A549 (cell line): ENCODE measurements at regions of chr14 and their contacts with region 1.

Region 1: GRCh38 chr14:104826189-104826860 is 25.4 kb downstream of the ZBTB42 start:
- DNase-seq: peak; percentile 82 to 92
- ATAC-seq: peak; percentile 78 to 86
- H3K4me3 ChIP-seq: peak overlapping the region; percentile 45
- H3K27ac ChIP-seq: peak overlapping the region; percentile 54 to 89
- H3K4me1 ChIP-seq: peaks cover 9% of the 10 kb centered on the region; the same call in 2 of the 3 replicates
- CTCF ChIP-seq: peak; percentile 92
- EP300 ChIP-seq: no peak
- POLR2A ChIP-seq: no peak; the same call in 1 of the 2 replicates
- RAD21 ChIP-seq: peak; percentile 63 to 86

Region 2: GRCh38 chr14:104341532-104342434 is 484.5 kb before region 1 on chr14:
- CTCF ChIA-PET with region 1: no interaction called
- POLR2A ChIA-PET with region 1: no interaction called
- DNase-seq: peak; percentile 81 to 87
- ATAC-seq: peak; percentile 85 to 95
- H3K4me3 ChIP-seq: peak overlapping the region; percentile 29; the same call in 1 of the 3 replicates
- H3K27ac ChIP-seq: no peak overlapping the region
- H3K4me1 ChIP-seq: no peaks in the 10 kb centered on the region
- CTCF ChIP-seq: peak; percentile 48
- EP300 ChIP-seq: no peak
- POLR2A ChIP-seq: no peak
- RAD21 ChIP-seq: peak; percentile 23; a peak in 2 of 5 replicates

Region 3: GRCh38 chr14:104752735-104753531 is 73.4 kb before region 1 on chr14 and contains the start of gene SIVA1:
- CTCF ChIA-PET with region 1: interaction called, 23 read pairs
- POLR2A ChIA-PET with region 1: no interaction called
- DNase-seq: peak; percentile 98 to 100
- ATAC-seq: peak; percentile 92 to 95
- H3K4me3 ChIP-seq: peak within 1 kb of the TSS; percentile 100
- H3K27ac ChIP-seq: peak within 1 kb of the TSS; percentile 93 to 96
- H3K4me1 ChIP-seq: peaks cover 28% of the 10 kb centered on the region
- CTCF ChIP-seq: no peak
- EP300 ChIP-seq: no peak
- POLR2A ChIP-seq: peak; percentile 86
- RAD21 ChIP-seq: no peak
- polyA plus RNA-seq, gene SIVA1: 90.0 and 94.2 TPM in 2 replicates

Region 4: GRCh38 chr14:104843442-104844305 is 17.3 kb after region 1 on chr14:
- CTCF ChIA-PET with region 1: interaction called, 28 read pairs
- POLR2A ChIA-PET with region 1: no interaction called
- DNase-seq: no peak
- ATAC-seq: peak; percentile 41 to 54; a peak in 3 of 6 replicates
- H3K4me3 ChIP-seq: no peak overlapping the region
- H3K27ac ChIP-seq: no peak overlapping the region
- H3K4me1 ChIP-seq: 0 out of 3 replicates have a peak, but pooled peaks cover 5% of the 10 kb centered on the region
- CTCF ChIP-seq: no peak
- EP300 ChIP-seq: no peak
- POLR2A ChIP-seq: no peak
- RAD21 ChIP-seq: no peak

Region 5: DNA sequence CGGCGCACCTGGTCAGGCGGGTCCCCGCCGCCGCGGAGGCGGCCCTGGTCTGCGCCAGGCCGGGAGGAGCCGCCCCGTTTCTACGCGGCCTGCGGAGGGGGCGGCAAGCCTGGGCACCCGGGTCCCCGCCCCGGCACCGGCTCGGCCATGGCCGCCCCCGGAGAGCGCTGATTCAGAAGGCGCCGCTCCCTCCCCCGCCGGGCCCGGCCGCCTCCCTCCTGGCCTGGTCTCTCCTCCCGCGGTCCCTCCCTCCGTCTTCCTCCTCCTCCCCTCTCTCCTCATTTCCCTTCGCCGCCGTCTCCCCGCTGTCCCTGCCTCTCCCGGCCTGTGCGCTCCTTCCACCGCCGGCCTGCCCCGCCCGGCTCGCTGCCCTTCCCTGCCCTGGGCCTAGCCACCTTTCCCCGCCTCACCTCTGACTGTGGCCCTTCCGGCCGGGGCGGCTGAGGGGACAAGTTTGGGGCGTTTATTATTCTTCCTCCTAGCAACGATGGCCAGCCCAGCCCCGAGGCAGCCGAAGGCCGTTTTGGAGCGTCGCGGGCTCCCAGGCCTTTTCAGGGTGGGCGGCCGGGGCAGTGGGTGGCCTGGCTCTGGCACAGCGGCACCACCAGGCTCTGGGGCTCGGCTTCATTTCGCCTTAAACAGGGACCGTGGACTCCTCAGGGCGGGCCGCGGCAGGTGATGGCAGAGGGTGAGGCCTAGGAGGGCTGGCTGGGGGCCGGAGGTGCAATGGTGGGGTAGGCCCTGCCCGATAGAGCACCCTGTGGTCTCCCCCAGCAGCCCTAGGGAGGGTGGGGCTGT is 39.5 kb after region 1 on chr14:
- CTCF ChIA-PET with region 1: interaction called, 31 read pairs
- POLR2A ChIA-PET with region 1: no interaction called
- DNase-seq: peak; percentile 41 to 58
- ATAC-seq: peak; percentile 61 to 78
- H3K4me3 ChIP-seq: peak overlapping the region; percentile 90
- H3K27ac ChIP-seq: peak overlapping the region; percentile 91 to 99
- H3K4me1 ChIP-seq: peaks cover 15% of the 10 kb centered on the region
- CTCF ChIP-seq: no peak
- EP300 ChIP-seq: no peak
- POLR2A ChIP-seq: peak; percentile 19; the same call in 1 of the 2 replicates
- RAD21 ChIP-seq: no peak

Region 6: GRCh38 chr14:104917993-104918392 is 91.7 kb after region 1 on chr14:
- CTCF ChIA-PET with region 1: no interaction called
- POLR2A ChIA-PET with region 1: no interaction called
- DNase-seq: no peak
- ATAC-seq: no peak
- H3K4me3 ChIP-seq: no peak overlapping the region
- H3K27ac ChIP-seq: no peak overlapping the region
- H3K4me1 ChIP-seq: no peaks in the 10 kb centered on the region
- CTCF ChIP-seq: no peak
- EP300 ChIP-seq: no peak
- POLR2A ChIP-seq: no peak
- RAD21 ChIP-seq: no peak

Region 7: GRCh38 chr14:105203057-105203531 is 376.8 kb after region 1 on chr14:
- CTCF ChIA-PET with region 1: no interaction called
- POLR2A ChIA-PET with region 1: no interaction called
- DNase-seq: peak; percentile 66 to 81
- ATAC-seq: peak; percentile 37 to 75
- H3K4me3 ChIP-seq: no peak overlapping the region
- H3K27ac ChIP-seq: peak overlapping the region in 1 of 2 experiments; percentile 58; a peak in 2 of 6 replicates
- H3K4me1 ChIP-seq: peaks cover 43% of the 10 kb centered on the region
- CTCF ChIP-seq: peak; percentile 89
- EP300 ChIP-seq: no peak
- POLR2A ChIP-seq: no peak
- RAD21 ChIP-seq: peak; percentile 63 to 76

Region 8: DNA sequence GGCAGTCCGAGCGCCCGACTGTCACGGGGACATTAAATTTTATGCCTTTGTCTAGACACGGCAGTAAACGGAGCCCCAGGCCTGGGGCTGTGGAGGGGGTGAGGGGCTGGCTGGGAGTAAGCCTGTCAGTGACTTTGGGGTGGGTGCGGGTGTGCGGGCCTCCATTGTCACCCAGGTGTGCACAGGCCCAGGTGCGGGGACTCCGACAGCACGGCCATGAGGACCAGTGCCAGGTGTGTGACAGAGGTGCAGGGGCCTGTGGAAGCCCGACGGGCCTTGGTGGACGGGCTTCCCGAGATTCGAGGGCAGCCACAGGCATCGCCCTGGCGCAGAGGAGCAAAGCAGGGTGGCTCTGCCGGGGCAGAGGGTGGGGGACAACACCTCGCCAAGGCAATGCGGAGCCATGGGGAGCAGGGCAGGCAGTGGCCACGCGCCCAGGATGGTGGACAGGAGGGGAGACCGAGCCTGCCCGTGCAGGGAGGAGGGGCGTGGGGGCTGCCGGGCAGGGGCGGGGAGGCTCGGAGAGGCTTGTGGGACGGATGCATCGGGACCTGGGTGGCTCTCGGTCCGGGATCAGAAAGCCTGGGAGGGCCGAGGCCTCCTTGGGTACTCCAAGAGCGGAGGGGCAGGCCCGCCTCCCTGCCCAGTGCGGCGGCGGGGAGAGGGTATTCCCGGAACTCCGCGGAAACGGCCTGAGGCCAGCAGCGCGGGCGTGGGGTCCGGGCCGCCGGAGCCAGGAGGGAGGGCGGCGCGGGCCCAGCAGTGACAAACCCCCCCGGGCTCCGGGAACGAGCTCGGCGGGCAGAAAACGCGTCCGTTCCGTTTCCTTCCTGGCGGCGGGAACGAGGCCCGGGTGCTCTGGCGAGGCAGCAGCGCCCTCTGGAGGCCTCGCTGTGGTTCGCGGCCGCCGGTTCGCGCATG is 701.6 kb after region 1 on chr14:
- CTCF ChIA-PET with region 1: no interaction called
- POLR2A ChIA-PET with region 1: no interaction called
- DNase-seq: peak; percentile 76 to 81
- ATAC-seq: peak; percentile 45 to 80
- H3K4me3 ChIP-seq: peak overlapping the region; percentile 52
- H3K27ac ChIP-seq: peak overlapping the region; percentile 92 to 96
- H3K4me1 ChIP-seq: peaks cover 21% of the 10 kb centered on the region
- CTCF ChIP-seq: peak; percentile 89
- EP300 ChIP-seq: no peak
- POLR2A ChIP-seq: peak; percentile 20; the same call in 1 of the 2 replicates
- RAD21 ChIP-seq: peak; percentile 80 to 92